ENCODE measurements at regions of chr2 and their contacts with region 1.

Region 1: GRCh38 chr2:10296127-10296526 is 6.6 kb upstream of the HPCAL1 start:
- DNase-seq: no peak
- H3K4me3 ChIP-seq: no peak overlapping the region
- H3K27ac ChIP-seq: no peak overlapping the region
- H3K4me1 ChIP-seq: peaks cover 14% of the 10 kb centered on the region
- H3K27me3 ChIP-seq: no peaks in the 10 kb centered on the region
- CTCF ChIP-seq: no peak
- POLR2A ChIP-seq: no peak

Region 2: GRCh38 chr2:10204326-10205161 is 91.6 kb before region 1 on chr2:
- CTCF ChIA-PET with region 1: no interaction called
- POLR2A ChIA-PET with region 1: no interaction called
- dilution Hi-C with region 1: no loop called
- intact Hi-C with region 1: no loop called
- DNase-seq: no peak
- H3K4me3 ChIP-seq: no peak overlapping the region
- H3K27ac ChIP-seq: no peak overlapping the region
- H3K4me1 ChIP-seq: no peaks in the 10 kb centered on the region
- H3K27me3 ChIP-seq: no peaks in the 10 kb centered on the region
- CTCF ChIP-seq: no peak
- POLR2A ChIP-seq: no peak

Region 3: GRCh38 chr2:10285556-10286198 is 10.4 kb before region 1 on chr2:
- CTCF ChIA-PET with region 1: interaction called, 23 read pairs
- POLR2A ChIA-PET with region 1: no interaction called
- dilution Hi-C with region 1: no loop called
- intact Hi-C with region 1: loop called (anchors 1 kb)
- DNase-seq: peak; percentile 79
- H3K4me3 ChIP-seq: no peak overlapping the region
- H3K27ac ChIP-seq: peak overlapping the region; percentile 22
- H3K4me1 ChIP-seq: peaks cover 31% of the 10 kb centered on the region
- H3K27me3 ChIP-seq: no peaks in the 10 kb centered on the region
- CTCF ChIP-seq: peak in 1 of 2 donors; percentile 2
- POLR2A ChIP-seq: no peak

Measured in endothelial cell of umbilical vein (primary cell).